Endothelial cell of umbilical vein (primary cell): ENCODE measurements at regions of chr6 and their contacts with region 1.

Region 1: GRCh38 chr6:107600936-107601335 is 111.0 kb downstream of the SOBP start:
- DNase-seq: peak; percentile 56
- H3K4me3 ChIP-seq: no peak overlapping the region
- H3K27ac ChIP-seq: no peak overlapping the region
- H3K4me1 ChIP-seq: peaks cover 12% of the 10 kb centered on the region
- H3K27me3 ChIP-seq: no peaks in the 10 kb centered on the region
- CTCF ChIP-seq: no peak
- POLR2A ChIP-seq: no peak

Region 2: DNA sequence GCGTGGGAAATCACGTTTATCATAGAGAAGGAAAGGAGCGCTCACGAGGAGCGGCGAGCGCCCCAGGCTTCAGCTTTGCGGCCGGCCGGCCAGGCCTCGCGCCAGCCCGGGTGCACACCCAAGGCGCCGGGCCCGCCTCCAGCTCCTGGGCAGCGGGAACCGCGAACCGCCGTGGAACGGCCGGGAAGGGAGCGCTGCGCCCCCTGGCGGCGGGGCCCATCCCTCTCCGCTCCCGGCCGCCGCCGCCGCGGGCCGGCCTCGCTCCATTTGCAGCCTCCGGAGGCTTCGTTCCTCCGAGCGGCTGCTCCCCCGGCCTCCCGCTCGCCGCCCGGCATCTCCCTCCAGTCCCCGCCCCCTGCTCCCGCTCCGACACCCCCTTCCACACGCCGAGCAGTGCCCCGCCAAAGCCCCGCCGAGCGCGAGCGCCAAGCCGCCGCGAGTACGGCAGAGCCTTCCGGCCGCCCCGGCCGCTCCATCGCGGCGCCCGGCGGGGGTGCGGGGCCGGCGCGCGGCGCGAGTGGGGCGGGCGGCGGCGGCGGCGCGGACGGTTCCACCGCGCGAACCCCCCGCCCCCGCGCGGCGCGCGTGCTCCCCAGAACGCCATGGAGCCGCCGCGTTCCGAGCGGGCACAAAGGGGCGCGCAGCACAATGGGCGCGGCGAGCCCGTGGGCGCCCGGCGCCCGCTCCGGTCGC is 486.6 kb before region 1 on chr6:
- CTCF ChIA-PET with region 1: no interaction called
- POLR2A ChIA-PET with region 1: no interaction called
- dilution Hi-C with region 1: no loop called
- intact Hi-C with region 1: no loop called
- DNase-seq: peak; percentile 78
- H3K4me3 ChIP-seq: peak overlapping the region; percentile 53 to 69 (median 69)
- H3K27ac ChIP-seq: no peak overlapping the region
- H3K4me1 ChIP-seq: peaks cover 17% of the 10 kb centered on the region
- H3K27me3 ChIP-seq: peaks cover 9 to 24% of the 10 kb centered on the region in 2 experiments
- CTCF ChIP-seq: peak; percentile 73 to 82
- POLR2A ChIP-seq: no peak

Region 3: GRCh38 chr6:107668743-107669474 is 68.0 kb after region 1 on chr6:
- CTCF ChIA-PET with region 1: no interaction called
- POLR2A ChIA-PET with region 1: no interaction called
- dilution Hi-C with region 1: no loop called
- intact Hi-C with region 1: loop called (anchors 5 kb)
- DNase-seq: no peak
- H3K4me3 ChIP-seq: no peak overlapping the region
- H3K27ac ChIP-seq: no peak overlapping the region
- H3K4me1 ChIP-seq: peaks cover 24% of the 10 kb centered on the region
- H3K27me3 ChIP-seq: no peaks in the 10 kb centered on the region
- CTCF ChIP-seq: no peak
- POLR2A ChIP-seq: no peak